ENCODE measurements at regions of chr4 and their contacts with region 1.

Region 1: GRCh38 chr4:154160519-154161301 is 330.9 kb downstream of the DCHS2 start:
- DNase-seq: no peak
- ATAC-seq: no peak
- H3K4me3 ChIP-seq: no peak overlapping the region
- H3K4me3 Mint-ChIP-seq: no peak overlapping the region
- H3K27ac ChIP-seq: no peak overlapping the region
- H3K27ac Mint-ChIP-seq: no peak overlapping the region
- H3K4me1 ChIP-seq: no peaks in the 10 kb centered on the region
- H3K4me1 Mint-ChIP-seq: no peaks in the 10 kb centered on the region
- H3K27me3 ChIP-seq: peaks cover 0 to 3% of the 10 kb centered on the region in 2 experiments
- H3K27me3 Mint-ChIP-seq: peaks cover 32% of the 10 kb centered on the region
- CTCF ChIP-seq: no peak

Region 2: GRCh38 chr4:153541456-153542096 is 619.1 kb before region 1 on chr4:
- CTCF ChIA-PET with region 1: no interaction called
- POLR2A ChIA-PET with region 1: no interaction called
- intact Hi-C with region 1: no loop called
- DNase-seq: peak in 2 of 14 experiments; percentile 31
- ATAC-seq: peak; percentile 37
- H3K4me3 ChIP-seq: no peak overlapping the region
- H3K4me3 Mint-ChIP-seq: no peak overlapping the region
- H3K27ac ChIP-seq: no peak overlapping the region
- H3K27ac Mint-ChIP-seq: peak overlapping the region; percentile 61
- H3K4me1 ChIP-seq: peaks cover 63% of the 10 kb centered on the region
- H3K4me1 Mint-ChIP-seq: peaks cover 92% of the 10 kb centered on the region
- H3K27me3 ChIP-seq: no peaks in the 10 kb centered on the region
- H3K27me3 Mint-ChIP-seq: no peaks in the 10 kb centered on the region
- CTCF ChIP-seq: no peak

Region 3: GRCh38 chr4:154004028-154004427 is 156.7 kb before region 1 on chr4:
- CTCF ChIA-PET with region 1: no interaction called
- POLR2A ChIA-PET with region 1: no interaction called
- intact Hi-C with region 1: no loop called
- DNase-seq: no peak
- ATAC-seq: no peak
- H3K4me3 ChIP-seq: no peak overlapping the region
- H3K4me3 Mint-ChIP-seq: no peak overlapping the region
- H3K27ac ChIP-seq: no peak overlapping the region
- H3K27ac Mint-ChIP-seq: no peak overlapping the region
- H3K4me1 ChIP-seq: no peaks in the 10 kb centered on the region
- H3K4me1 Mint-ChIP-seq: no peaks in the 10 kb centered on the region
- H3K27me3 ChIP-seq: peaks cover 0 to 2% of the 10 kb centered on the region in 2 experiments
- H3K27me3 Mint-ChIP-seq: peaks cover 30% of the 10 kb centered on the region
- CTCF ChIP-seq: no peak

Region 4: GRCh38 chr4:154082760-154083535 is 77.8 kb before region 1 on chr4:
- CTCF ChIA-PET with region 1: no interaction called
- POLR2A ChIA-PET with region 1: no interaction called
- intact Hi-C with region 1: no loop called
- DNase-seq: peak in 1 of 14 experiments; percentile 3
- ATAC-seq: no peak
- H3K4me3 ChIP-seq: no peak overlapping the region
- H3K4me3 Mint-ChIP-seq: no peak overlapping the region
- H3K27ac ChIP-seq: no peak overlapping the region
- H3K27ac Mint-ChIP-seq: no peak overlapping the region
- H3K4me1 ChIP-seq: no peaks in the 10 kb centered on the region
- H3K4me1 Mint-ChIP-seq: no peaks in the 10 kb centered on the region
- H3K27me3 ChIP-seq: no peaks in the 10 kb centered on the region
- H3K27me3 Mint-ChIP-seq: peaks cover 15% of the 10 kb centered on the region
- CTCF ChIP-seq: no peak

Region 5: DNA sequence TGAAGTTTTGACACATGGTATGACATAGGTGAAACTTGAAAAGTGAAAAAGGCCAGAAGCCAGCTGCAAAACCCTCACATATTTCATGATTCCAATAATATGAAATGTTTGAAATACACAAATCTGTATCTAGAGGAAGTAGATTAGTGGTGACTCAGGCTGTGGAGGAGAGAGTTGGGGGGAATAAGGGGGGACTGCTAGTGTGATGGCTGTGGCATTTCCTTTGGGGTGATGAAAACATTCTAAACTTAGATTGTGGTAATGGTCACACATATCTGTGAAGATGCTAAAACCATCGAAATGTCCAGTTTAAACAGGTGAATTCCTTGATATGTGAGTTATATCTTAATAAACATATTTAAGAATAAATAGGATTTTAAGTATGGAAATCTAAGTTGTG is 28.3 kb before region 1 on chr4:
- CTCF ChIA-PET with region 1: no interaction called
- POLR2A ChIA-PET with region 1: no interaction called
- intact Hi-C with region 1: loop called in 1 of 2 experiments (anchors 1 kb)
- DNase-seq: no peak
- ATAC-seq: no peak
- H3K4me3 ChIP-seq: no peak overlapping the region
- H3K4me3 Mint-ChIP-seq: no peak overlapping the region
- H3K27ac ChIP-seq: no peak overlapping the region
- H3K27ac Mint-ChIP-seq: no peak overlapping the region
- H3K4me1 ChIP-seq: no peaks in the 10 kb centered on the region
- H3K4me1 Mint-ChIP-seq: no peaks in the 10 kb centered on the region
- H3K27me3 ChIP-seq: no peaks in the 10 kb centered on the region
- H3K27me3 Mint-ChIP-seq: peaks cover 28% of the 10 kb centered on the region
- CTCF ChIP-seq: no peak

Region 6: GRCh38 chr4:154189346-154189745 is 28.6 kb after region 1 on chr4:
- CTCF ChIA-PET with region 1: no interaction called
- POLR2A ChIA-PET with region 1: no interaction called
- intact Hi-C with region 1: loop called in 1 of 2 experiments (anchors 1 kb)
- DNase-seq: no peak
- ATAC-seq: no peak
- H3K4me3 ChIP-seq: no peak overlapping the region
- H3K4me3 Mint-ChIP-seq: no peak overlapping the region
- H3K27ac ChIP-seq: no peak overlapping the region
- H3K27ac Mint-ChIP-seq: no peak overlapping the region
- H3K4me1 ChIP-seq: no peaks in the 10 kb centered on the region
- H3K4me1 Mint-ChIP-seq: no peaks in the 10 kb centered on the region
- H3K27me3 ChIP-seq: no peaks in the 10 kb centered on the region
- H3K27me3 Mint-ChIP-seq: peaks cover 18% of the 10 kb centered on the region
- CTCF ChIP-seq: no peak

Region 7: GRCh38 chr4:154208424-154208823 is 47.7 kb after region 1 on chr4:
- CTCF ChIA-PET with region 1: no interaction called
- POLR2A ChIA-PET with region 1: no interaction called
- intact Hi-C with region 1: loop called in 1 of 2 experiments (anchors 2 kb)
- DNase-seq: no peak
- ATAC-seq: no peak
- H3K4me3 ChIP-seq: no peak overlapping the region
- H3K4me3 Mint-ChIP-seq: no peak overlapping the region
- H3K27ac ChIP-seq: no peak overlapping the region
- H3K27ac Mint-ChIP-seq: no peak overlapping the region
- H3K4me1 ChIP-seq: no peaks in the 10 kb centered on the region
- H3K4me1 Mint-ChIP-seq: no peaks in the 10 kb centered on the region
- H3K27me3 ChIP-seq: no peaks in the 10 kb centered on the region
- H3K27me3 Mint-ChIP-seq: peaks cover 30% of the 10 kb centered on the region
- CTCF ChIP-seq: no peak

Measured in CD4-positive, alpha-beta T cell (primary cell).